ENCODE measurements at regions of chr5 and their contacts with region 1.

Region 1: DNA sequence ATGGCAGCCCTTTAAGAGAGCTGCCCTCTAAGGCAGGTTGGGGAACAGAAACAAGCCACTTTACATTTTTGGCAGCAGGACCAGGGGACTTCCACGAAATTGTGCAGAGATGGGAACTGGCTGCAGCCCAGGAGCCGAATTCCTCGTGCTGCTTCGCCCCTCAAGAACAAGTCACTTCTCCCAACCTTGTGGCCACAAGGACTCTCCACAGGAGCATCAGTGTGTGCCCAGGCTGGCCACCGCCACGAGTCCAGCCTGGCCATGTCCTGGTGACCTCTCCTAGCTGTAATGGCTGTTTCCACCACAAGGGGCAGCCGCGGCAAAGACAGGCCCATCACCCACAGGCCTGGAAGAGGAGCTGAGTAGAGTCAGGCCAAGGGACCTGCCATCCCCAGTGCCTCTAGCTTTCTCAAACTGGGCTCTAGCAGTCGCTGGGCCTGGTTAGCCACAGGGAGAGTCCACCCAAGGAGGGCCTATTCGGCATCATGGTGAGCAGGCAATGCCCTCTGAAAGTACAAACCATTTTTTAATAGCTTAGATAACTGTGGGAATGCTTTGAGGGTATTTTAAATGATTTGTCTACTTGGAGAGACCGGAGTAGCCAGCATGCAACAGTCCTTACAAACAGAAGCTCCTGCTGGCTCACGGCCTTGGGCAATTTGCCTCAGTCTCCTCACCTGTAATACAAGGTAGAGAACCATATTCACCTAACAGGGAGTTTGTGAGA is 129.0 kb downstream of the COL23A1 start:
- DNase-seq: peak; percentile 80 to 88
- ATAC-seq: peak; percentile 92 to 98 (median 96)
- H3K4me3 ChIP-seq: peak overlapping the region in 1 of 10 donors; percentile 25
- H3K27ac ChIP-seq: peak overlapping the region; percentile 53 to 82 (median 71)
- H3K4me1 ChIP-seq: peaks cover 0 to 16% (median 11%) of the 10 kb centered on the region in 9 donors
- H3K27me3 ChIP-seq: no peaks in the 10 kb centered on the region
- CTCF ChIP-seq: peak; percentile 81 to 92 (median 88)

Region 2: DNA sequence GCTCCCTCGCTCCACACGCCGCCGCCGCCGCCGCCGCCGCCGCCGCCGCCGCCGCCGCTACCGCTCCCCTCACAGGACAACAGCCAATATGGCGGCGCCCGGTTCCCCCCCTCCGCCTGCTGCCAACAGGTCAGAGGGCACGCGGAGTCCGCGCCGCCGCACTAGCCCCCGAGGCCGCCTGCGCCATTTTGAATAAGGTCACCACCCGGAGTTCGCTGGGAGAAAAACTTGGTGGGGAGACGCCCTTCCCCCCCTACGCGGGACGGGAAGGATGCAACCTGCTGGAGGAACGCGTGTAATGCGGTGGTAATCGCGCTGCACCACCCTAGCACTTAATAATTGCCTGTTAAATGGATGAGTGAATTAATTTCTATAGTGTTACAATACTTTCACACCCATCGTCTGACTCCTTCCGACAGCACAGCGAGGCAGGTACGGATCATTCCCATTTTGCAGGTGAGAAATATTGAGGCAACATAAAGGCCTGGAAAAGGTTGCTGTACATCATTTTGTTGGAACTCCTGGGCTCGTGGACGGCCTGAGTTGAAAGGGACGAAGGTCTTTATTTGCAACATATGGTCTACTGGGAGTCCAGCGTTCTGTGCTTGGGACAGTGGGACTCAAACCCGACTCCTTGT is 906.6 kb before region 1 on chr5 and contains the start of gene FAM193B:
- intact Hi-C with region 1: no loop called
- DNase-seq: peak; percentile 93 to 95
- ATAC-seq: peak; percentile 93 to 98 (median 96)
- H3K4me3 ChIP-seq: peak within 1 kb of the TSS; percentile 68 to 99 (median 96)
- H3K27ac ChIP-seq: peak within 1 kb of the TSS; percentile 75 to 90 (median 86)
- H3K4me1 ChIP-seq: peaks cover 9 to 48% (median 29%) of the 10 kb centered on the region in 9 donors
- H3K27me3 ChIP-seq: no peaks in the 10 kb centered on the region
- CTCF ChIP-seq: peak in 6 of 9 donors; percentile 11 to 36 (median 24)
- total RNA-seq, gene FAM193B: 14.1 to 34.4 (median 20.1) TPM

Region 3: GRCh38 chr5:178428341-178428964 is 32.7 kb before region 1 on chr5:
- intact Hi-C with region 1: loop called in 1 of 10 experiments (anchors 2 kb)
- DNase-seq: peak; percentile 58 to 76
- ATAC-seq: peak; percentile 80 to 97 (median 92)
- H3K4me3 ChIP-seq: no peak overlapping the region
- H3K27ac ChIP-seq: peak overlapping the region; percentile 66 to 90 (median 82)
- H3K4me1 ChIP-seq: peaks cover 0 to 23% (median 13%) of the 10 kb centered on the region in 9 donors
- H3K27me3 ChIP-seq: no peaks in the 10 kb centered on the region
- CTCF ChIP-seq: no peak

Region 4: GRCh38 chr5:178535299-178536175 is 74.4 kb after region 1 on chr5:
- intact Hi-C with region 1: loop called in 1 of 10 experiments (anchors 10 kb)
- DNase-seq: peak; percentile 69 to 78
- ATAC-seq: peak; percentile 80 to 97 (median 94)
- H3K4me3 ChIP-seq: no peak overlapping the region
- H3K27ac ChIP-seq: peak overlapping the region in 8 of 10 donors; percentile 21 to 80 (median 56)
- H3K4me1 ChIP-seq: peaks cover 0 to 35% (median 10%) of the 10 kb centered on the region in 9 donors
- H3K27me3 ChIP-seq: no peaks in the 10 kb centered on the region
- CTCF ChIP-seq: no peak

Region 5: DNA sequence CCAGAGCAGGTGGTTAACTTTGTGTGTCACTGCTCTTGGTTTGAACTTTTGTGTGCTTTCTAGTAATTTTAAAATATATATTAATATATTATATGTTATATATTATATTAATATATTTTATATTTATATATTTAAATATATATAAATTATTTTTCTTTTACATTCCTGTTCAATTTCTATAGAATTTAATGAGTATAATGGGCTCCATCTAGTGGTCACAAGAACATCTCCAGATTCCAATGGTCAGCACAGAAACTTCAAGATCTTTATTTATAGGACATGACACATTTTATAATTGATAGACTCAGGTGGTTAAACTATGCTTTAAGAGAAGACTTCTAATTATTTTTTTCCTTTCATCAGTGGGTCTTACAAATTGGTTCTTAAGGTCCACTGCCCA is 89.9 kb after region 1 on chr5:
- intact Hi-C with region 1: loop called in 8 of 10 experiments (anchors 2 to 10 kb)
- DNase-seq: no peak
- ATAC-seq: no peak
- H3K4me3 ChIP-seq: no peak overlapping the region
- H3K27ac ChIP-seq: no peak overlapping the region
- H3K4me1 ChIP-seq: peaks cover 4 to 21% (median 11%) of the 10 kb centered on the region in 9 donors
- H3K27me3 ChIP-seq: peaks cover 0 to 9% (median 0%) of the 10 kb centered on the region in 7 donors
- CTCF ChIP-seq: peak in 8 of 9 donors; percentile 27 to 74 (median 60)

Region 6: GRCh38 chr5:178590141-178590923 is 129.2 kb after region 1 on chr5 and contains the start of gene COL23A1:
- intact Hi-C with region 1: loop called in 1 of 10 experiments (anchors 5 kb)
- DNase-seq: peak; percentile 74 to 75
- ATAC-seq: peak; percentile 82 to 91 (median 87)
- H3K4me3 ChIP-seq: peak within 1 kb of the TSS in 9 of 10 donors; percentile 37 to 72 (median 58)
- H3K27ac ChIP-seq: peak within 1 kb of the TSS; percentile 27 to 80 (median 71)
- H3K4me1 ChIP-seq: peaks cover 3 to 36% (median 28%) of the 10 kb centered on the region in 9 donors
- H3K27me3 ChIP-seq: peaks cover 0 to 45% (median 10%) of the 10 kb centered on the region in 7 donors
- CTCF ChIP-seq: peak; percentile 42 to 82 (median 72)
- total RNA-seq, gene COL23A1: 9.8 to 29.0 (median 18.8) TPM

Measured in heart right ventricle (tissue), 16 donors.